ENCODE measurements at regions of chr2 and their contacts with region 1.

Region 1: DNA sequence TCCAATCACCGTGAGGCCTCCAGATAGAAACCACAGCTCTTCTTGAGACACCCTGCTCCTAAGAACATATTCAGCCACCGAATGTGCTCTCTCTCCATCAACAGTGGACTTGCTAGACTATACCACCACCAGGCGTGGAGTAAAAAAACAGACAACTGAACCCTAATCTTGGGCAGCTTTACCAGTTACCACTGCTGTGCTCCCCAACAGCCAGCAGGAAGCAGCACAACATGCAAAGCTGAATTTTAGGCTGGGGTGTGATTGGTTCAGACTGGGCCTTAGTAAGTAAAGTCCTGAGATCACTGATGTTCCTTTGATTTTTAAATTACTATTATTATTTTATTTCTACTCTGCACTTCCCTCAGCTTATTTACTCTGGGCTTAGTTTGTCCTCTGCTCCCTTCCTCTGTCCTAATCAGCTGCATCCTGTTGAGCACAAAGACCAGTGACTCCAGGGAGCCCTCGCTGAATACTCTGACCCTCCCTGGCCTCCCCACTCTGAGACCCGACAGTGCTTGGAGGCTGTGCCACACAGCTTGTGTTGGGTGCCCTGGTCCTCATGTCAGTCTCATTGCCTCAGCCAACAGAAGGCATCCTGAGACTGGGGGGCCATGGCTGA is 21.9 kb downstream of the MRPL35 start:
- DNase-seq: peak; percentile 27
- ATAC-seq: peak; percentile 88
- H3K4me3 ChIP-seq: no peak overlapping the region
- H3K27ac ChIP-seq: no peak overlapping the region
- H3K4me1 ChIP-seq: no peaks in the 10 kb centered on the region
- H3K27me3 ChIP-seq: no peaks in the 10 kb centered on the region
- CTCF ChIP-seq: peak; percentile 87 to 97 (median 87)
- POLR2A ChIP-seq: no peak
- RAD21 ChIP-seq: peak; percentile 84

Region 2: DNA sequence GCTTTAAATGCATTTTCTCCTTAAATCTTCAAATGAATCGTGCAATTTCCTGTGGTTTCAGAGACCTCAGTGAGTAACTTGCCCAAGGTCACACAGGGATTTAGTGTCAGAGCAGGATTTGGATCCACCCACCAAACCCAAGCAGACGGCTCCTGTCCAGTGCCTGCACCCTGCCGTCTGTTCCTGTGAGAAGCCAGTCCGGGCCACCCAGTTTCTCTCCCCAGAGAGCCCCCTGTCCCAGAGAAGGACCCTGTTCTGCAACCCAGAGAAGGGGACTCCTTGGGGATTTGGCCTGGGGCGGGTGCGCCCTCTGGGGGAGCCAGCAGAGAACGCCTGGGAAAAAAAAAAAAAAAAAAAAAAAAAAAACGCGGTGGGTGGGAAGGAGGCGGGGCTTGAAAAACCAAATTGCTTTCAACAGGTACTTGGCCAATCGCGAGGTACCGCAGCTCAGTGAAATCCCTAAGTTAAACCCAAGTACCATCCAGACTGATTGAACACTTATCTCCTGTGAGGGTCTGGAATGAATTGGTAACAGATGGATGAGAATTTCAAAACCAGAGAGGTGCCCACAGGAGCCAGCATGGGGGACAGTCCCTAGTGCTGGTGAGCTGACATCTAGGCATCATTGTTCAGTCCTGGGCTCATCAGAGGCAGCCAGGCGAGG is 147.1 kb after region 1 on chr2:
- CTCF ChIA-PET with region 1: interaction called, 8 read pairs
- POLR2A ChIA-PET with region 1: no interaction called
- RAD21 ChIA-PET with region 1: interaction called in 1 of 2 experiments, 3 read pairs
- intact Hi-C with region 1: loop called (anchors 1 kb)
- DNase-seq: peak; percentile 33
- ATAC-seq: peak; percentile 71
- H3K4me3 ChIP-seq: no peak overlapping the region
- H3K27ac ChIP-seq: no peak overlapping the region
- H3K4me1 ChIP-seq: peaks cover 0 to 8% of the 10 kb centered on the region in 2 experiments; a peak in 1 of 4 replicates
- H3K27me3 ChIP-seq: no peaks in the 10 kb centered on the region
- CTCF ChIP-seq: peak; percentile 73 to 82 (median 81); a peak in 5 of 6 replicates
- POLR2A ChIP-seq: no peak
- RAD21 ChIP-seq: peak; percentile 83

Region 3: GRCh38 chr2:86396291-86396785 is 175.2 kb after region 1 on chr2:
- CTCF ChIA-PET with region 1: interaction called, 10 read pairs
- POLR2A ChIA-PET with region 1: no interaction called
- RAD21 ChIA-PET with region 1: interaction called in 1 of 2 experiments, 3 read pairs
- intact Hi-C with region 1: no loop called
- DNase-seq: peak; percentile 33
- ATAC-seq: peak; percentile 80
- H3K4me3 ChIP-seq: no peak overlapping the region
- H3K27ac ChIP-seq: no peak overlapping the region
- H3K4me1 ChIP-seq: peaks cover 9% of the 10 kb centered on the region in 2 experiments; a peak in 3 of 4 replicates
- H3K27me3 ChIP-seq: no peaks in the 10 kb centered on the region
- CTCF ChIP-seq: peak; percentile 53 to 68 (median 60); a peak in 5 of 6 replicates
- POLR2A ChIP-seq: no peak
- RAD21 ChIP-seq: peak; percentile 75